Mammary epithelial cell (primary cell): ENCODE measurements at regions of chr2 and their contacts with region 1.

Region 1: DNA sequence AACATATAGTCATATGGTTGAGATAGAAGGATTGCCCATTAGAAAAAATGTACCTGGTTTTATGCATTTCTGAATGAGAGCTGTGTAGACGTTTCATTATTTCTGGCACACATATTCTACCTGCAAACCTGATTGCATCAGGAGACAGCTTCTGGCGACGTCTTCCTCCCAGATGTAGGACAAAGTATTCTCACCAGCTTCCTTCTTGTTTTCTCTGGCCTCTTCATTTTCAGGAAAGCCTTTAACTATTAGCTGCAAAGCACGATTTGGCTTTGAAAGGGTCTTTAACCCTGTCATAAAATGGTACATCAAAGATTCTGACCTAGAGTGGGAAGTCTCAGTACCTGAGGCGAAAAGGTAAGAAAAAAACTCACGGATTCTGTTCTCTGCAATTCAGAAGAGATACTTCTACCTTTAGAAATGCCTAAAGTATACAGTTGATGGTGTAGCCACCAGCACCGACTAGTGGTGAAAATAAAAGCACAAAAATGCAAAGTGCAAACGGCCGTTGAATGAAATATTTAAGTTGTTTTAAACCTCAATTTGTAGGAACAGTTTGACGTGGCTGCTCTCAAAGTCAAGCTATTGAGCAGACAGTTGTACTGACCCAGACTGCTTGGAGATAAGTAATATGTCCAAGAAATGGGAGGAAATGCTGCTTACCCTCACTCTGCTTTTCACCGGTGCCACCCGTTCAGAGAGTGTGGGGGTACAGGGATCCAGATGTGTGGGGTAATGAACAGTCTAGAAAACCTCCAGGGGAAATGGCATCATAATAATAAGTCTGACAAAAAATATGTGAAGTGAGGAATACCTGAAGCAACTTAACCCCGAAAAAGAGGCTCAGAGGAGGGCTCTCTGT is 20.2 kb downstream of the IL18RAP start:
- DNase-seq: peak; percentile 35
- H3K4me3 ChIP-seq: no peak overlapping the region
- H3K27ac ChIP-seq: no peak overlapping the region
- H3K4me1 ChIP-seq: peaks cover 11% of the 10 kb centered on the region
- H3K27me3 ChIP-seq: no peaks in the 10 kb centered on the region
- CTCF ChIP-seq: peak; percentile 72 to 78

Region 2: DNA sequence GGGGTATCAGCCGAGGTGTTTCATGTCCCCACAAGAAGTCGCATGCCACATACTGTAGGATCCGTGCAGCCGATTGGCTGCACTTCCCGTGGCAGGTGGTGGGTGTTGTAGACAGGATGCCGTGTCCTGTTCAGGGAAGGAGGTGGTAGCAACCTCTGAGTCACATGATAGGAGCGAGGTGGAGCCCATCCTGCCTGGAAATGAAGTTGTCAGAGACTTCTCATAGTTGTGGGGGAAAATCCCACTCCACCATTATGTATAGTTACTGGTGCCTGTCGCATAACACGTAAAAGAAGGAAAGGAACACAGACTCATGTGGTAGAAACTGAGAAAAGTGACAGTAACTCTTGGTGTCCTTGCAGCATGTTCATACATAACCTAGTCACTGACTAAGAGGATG is 542.8 kb before region 1 on chr2:
- CTCF ChIA-PET with region 1: interaction called, 31 read pairs
- dilution Hi-C with region 1: no loop called
- in situ Hi-C with region 1: loop called in 1 of 2 experiments (anchors 25 kb)
- intact Hi-C with region 1: no loop called
- DNase-seq: no peak
- H3K4me3 ChIP-seq: no peak overlapping the region
- H3K27ac ChIP-seq: peak overlapping the region; percentile 60
- H3K4me1 ChIP-seq: peaks cover 28% of the 10 kb centered on the region
- H3K27me3 ChIP-seq: no peaks in the 10 kb centered on the region
- CTCF ChIP-seq: no peak

Region 3: GRCh38 chr2:102166189-102166845 is 276.9 kb before region 1 on chr2:
- CTCF ChIA-PET with region 1: no interaction called
- dilution Hi-C with region 1: no loop called
- in situ Hi-C with region 1: no loop called
- intact Hi-C with region 1: loop called (anchors 2 kb)
- DNase-seq: peak; percentile 66
- H3K4me3 ChIP-seq: no peak overlapping the region
- H3K27ac ChIP-seq: peak overlapping the region; percentile 17
- H3K4me1 ChIP-seq: peaks cover 4% of the 10 kb centered on the region
- H3K27me3 ChIP-seq: no peaks in the 10 kb centered on the region
- CTCF ChIP-seq: peak; percentile 60 to 76

Region 4: DNA sequence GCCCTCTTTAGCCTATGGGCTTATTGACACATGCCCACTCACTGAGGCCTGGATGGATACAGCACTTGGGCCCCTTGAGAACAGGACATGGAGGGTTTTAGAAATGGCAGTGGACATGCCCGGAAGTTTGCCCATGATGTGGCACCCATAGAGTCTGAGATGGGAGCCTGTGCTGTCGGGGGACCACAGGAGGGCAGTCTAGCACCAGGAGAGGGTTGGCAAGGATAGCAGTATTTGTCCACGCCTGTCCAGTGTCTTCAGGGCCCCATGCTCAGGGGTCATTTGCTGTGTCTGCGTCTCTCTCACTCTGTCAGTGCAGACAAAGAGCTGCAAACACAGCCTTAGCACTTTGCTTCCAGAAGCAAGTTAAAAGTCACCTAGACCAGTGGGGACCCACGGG is 207.7 kb before region 1 on chr2:
- CTCF ChIA-PET with region 1: interaction called, 21 read pairs
- dilution Hi-C with region 1: no loop called
- in situ Hi-C with region 1: loop called in 1 of 2 experiments (anchors 10 kb)
- intact Hi-C with region 1: loop called (anchors 1 kb)
- DNase-seq: no peak
- H3K4me3 ChIP-seq: no peak overlapping the region
- H3K27ac ChIP-seq: no peak overlapping the region
- H3K4me1 ChIP-seq: peaks cover 2% of the 10 kb centered on the region
- H3K27me3 ChIP-seq: no peaks in the 10 kb centered on the region
- CTCF ChIP-seq: peak; percentile 50 to 54

Region 5: DNA sequence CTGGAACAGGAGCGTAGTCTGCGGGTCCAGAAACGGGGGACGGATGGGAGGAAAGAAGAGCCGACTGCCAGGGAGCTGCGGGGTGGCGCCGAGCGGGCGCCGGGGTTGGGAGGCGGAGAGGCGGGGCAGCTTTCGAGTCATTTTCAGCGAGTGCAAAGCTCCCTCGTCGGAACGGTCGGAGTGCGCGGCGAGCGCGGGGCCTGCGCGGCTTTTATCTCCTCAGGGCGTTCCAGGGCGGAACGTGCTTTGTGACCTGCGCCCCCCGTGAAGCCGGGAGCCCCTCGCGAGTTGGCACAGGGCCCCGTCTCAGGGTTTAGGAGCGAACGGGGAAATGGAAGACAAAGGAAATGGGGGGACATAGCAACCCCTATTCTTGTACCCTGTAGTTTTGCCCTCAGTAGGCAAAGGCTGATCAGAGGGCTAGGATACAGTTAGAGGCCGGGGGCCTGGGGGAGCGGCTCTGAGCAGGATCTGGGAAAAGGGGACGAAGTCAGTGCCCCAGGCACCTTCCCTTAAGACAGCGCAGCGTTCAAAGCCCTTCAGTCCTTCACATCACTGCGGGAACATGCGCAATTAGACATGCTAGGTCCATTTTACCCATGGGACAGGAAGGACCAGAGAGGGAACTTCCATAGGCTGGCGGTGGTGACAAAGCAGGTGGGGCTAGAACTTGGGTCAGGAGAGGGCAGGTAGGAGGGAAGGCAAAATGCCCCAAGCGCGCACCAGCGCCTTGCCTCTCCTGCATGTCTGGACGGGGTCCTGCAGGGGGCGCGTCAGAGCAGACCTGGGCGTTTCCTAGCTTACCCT is 192.0 kb before region 1 on chr2:
- CTCF ChIA-PET with region 1: no interaction called
- dilution Hi-C with region 1: no loop called
- in situ Hi-C with region 1: loop called (anchors 10 kb)
- intact Hi-C with region 1: no loop called
- DNase-seq: no peak
- H3K4me3 ChIP-seq: peak overlapping the region; percentile 5 to 43 (median 36)
- H3K27ac ChIP-seq: no peak overlapping the region
- H3K4me1 ChIP-seq: peaks cover 9% of the 10 kb centered on the region
- H3K27me3 ChIP-seq: no peaks in the 10 kb centered on the region
- CTCF ChIP-seq: peak; percentile 39 to 62

Region 6: DNA sequence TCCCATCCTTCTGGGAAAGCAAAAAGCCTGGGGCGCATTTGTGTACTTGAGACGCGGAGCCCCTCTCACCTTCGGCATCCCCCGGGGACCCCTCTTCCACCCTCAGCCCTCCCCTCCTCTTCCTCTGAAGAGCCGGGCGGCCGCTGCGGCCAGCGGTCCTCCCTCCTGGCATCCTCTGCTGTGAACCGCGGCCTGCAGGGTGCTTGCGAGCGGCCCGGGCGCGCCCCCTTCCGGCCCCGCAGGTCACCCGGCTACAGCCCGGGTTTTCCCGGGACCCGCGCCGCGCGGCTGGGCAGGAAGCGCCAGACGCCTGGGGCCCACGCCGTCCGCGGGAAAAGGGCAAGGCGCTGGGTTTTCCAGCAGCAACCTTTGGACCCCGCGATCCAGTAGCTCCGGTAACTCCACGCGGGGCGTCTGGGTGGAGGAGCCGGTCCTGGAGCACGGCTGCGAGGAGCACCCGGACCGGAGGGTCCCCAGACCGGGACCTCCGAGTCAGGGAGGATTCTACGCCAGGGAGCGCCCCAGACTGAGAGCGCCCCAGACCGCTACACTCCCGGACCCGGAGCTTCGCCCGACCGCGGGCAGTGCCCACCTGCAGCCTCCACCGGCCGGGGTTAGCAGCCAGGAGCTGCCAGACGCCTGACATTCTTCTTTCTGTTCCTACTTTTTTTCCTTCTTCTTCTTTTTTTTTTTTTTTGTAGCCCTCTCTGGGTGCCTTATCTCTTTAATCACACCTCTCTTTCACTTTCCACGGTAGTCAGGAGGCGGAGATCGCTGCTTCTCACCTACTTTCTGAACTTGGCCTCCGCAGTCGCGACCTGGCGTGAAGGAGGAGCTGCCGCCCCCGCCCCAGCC is 87.4 kb before region 1 on chr2 and contains the start of gene IL18R1:
- CTCF ChIA-PET with region 1: no interaction called
- dilution Hi-C with region 1: loop called (anchors 5 kb)
- in situ Hi-C with region 1: no loop called
- intact Hi-C with region 1: loop called (anchors 1 kb)
- DNase-seq: peak; percentile 65
- H3K4me3 ChIP-seq: peak within 1 kb of the TSS; percentile 84 to 88 (median 85)
- H3K27ac ChIP-seq: peak within 1 kb of the TSS; percentile 58
- H3K4me1 ChIP-seq: peaks cover 8% of the 10 kb centered on the region
- H3K27me3 ChIP-seq: no peaks in the 10 kb centered on the region
- CTCF ChIP-seq: peak; percentile 55 to 85
- total RNA-seq, gene IL18R1: 1.2 to 3.9 TPM